Activated naive CD4-positive, alpha-beta T cell treated with anti-CD3 and anti-CD28 coated beads for 36 hours (primary cell): ENCODE measurements at regions of chr1 and their contacts with region 1.

Region 1: GRCh38 chr1:186618401-186619170 is 61.6 kb downstream of the PTGS2 start:
- DNase-seq: peak; percentile 77
- H3K4me3 Mint-ChIP-seq: no peak overlapping the region
- H3K27ac Mint-ChIP-seq: no peak overlapping the region
- H3K4me1 Mint-ChIP-seq: peaks cover 42% of the 10 kb centered on the region
- H3K27me3 Mint-ChIP-seq: peaks cover 2% of the 10 kb centered on the region

Region 2: GRCh38 chr1:186541017-186541416 is 77.6 kb before region 1 on chr1:
- CTCF ChIA-PET with region 1: no interaction called
- intact Hi-C with region 1: no loop called
- DNase-seq: no peak
- H3K4me3 Mint-ChIP-seq: no peak overlapping the region
- H3K27ac Mint-ChIP-seq: no peak overlapping the region
- H3K4me1 Mint-ChIP-seq: no peaks in the 10 kb centered on the region
- H3K27me3 Mint-ChIP-seq: no peaks in the 10 kb centered on the region

Region 3: GRCh38 chr1:186571771-186572170 is 46.8 kb before region 1 on chr1:
- CTCF ChIA-PET with region 1: no interaction called
- intact Hi-C with region 1: loop called (anchors 1 kb)
- DNase-seq: no peak
- H3K4me3 Mint-ChIP-seq: no peak overlapping the region
- H3K27ac Mint-ChIP-seq: no peak overlapping the region
- H3K4me1 Mint-ChIP-seq: peaks cover 14% of the 10 kb centered on the region
- H3K27me3 Mint-ChIP-seq: no peaks in the 10 kb centered on the region

Region 4: GRCh38 chr1:186628910-186629309 is 10.3 kb after region 1 on chr1:
- CTCF ChIA-PET with region 1: no interaction called
- intact Hi-C with region 1: no loop called
- DNase-seq: no peak
- H3K4me3 Mint-ChIP-seq: no peak overlapping the region
- H3K27ac Mint-ChIP-seq: no peak overlapping the region
- H3K4me1 Mint-ChIP-seq: no peaks in the 10 kb centered on the region
- H3K27me3 Mint-ChIP-seq: peaks cover 11% of the 10 kb centered on the region

Region 5: GRCh38 chr1:186648613-186649012 is 30.0 kb after region 1 on chr1:
- CTCF ChIA-PET with region 1: no interaction called
- intact Hi-C with region 1: no loop called
- DNase-seq: no peak
- H3K4me3 Mint-ChIP-seq: no peak overlapping the region
- H3K27ac Mint-ChIP-seq: no peak overlapping the region
- H3K4me1 Mint-ChIP-seq: no peaks in the 10 kb centered on the region
- H3K27me3 Mint-ChIP-seq: no peaks in the 10 kb centered on the region

Region 6: GRCh38 chr1:186680245-186681061 is 61.9 kb after region 1 on chr1 and contains the start of gene PTGS2:
- CTCF ChIA-PET with region 1: interaction called, 5 read pairs
- intact Hi-C with region 1: loop called (anchors 1 kb)
- DNase-seq: peak; percentile 65
- H3K4me3 Mint-ChIP-seq: peak within 1 kb of the TSS; percentile 78
- H3K27ac Mint-ChIP-seq: no peak within 1 kb of the TSS
- H3K4me1 Mint-ChIP-seq: peaks cover 10% of the 10 kb centered on the region
- H3K27me3 Mint-ChIP-seq: peaks cover 52% of the 10 kb centered on the region
- total RNA-seq, gene PTGS2: 1.8 to 2.0 TPM

Region 7: GRCh38 chr1:186738926-186739325 is 120.3 kb after region 1 on chr1:
- CTCF ChIA-PET with region 1: no interaction called
- intact Hi-C with region 1: loop called (anchors 1 kb)
- DNase-seq: peak; percentile 31
- H3K4me3 Mint-ChIP-seq: no peak overlapping the region
- H3K27ac Mint-ChIP-seq: peak overlapping the region; percentile 11
- H3K4me1 Mint-ChIP-seq: peaks cover 14% of the 10 kb centered on the region
- H3K27me3 Mint-ChIP-seq: peaks cover 10% of the 10 kb centered on the region